BJ (cell line): ENCODE measurements at regions of chr1 and their contacts with region 1.

Region 1: GRCh38 chr1:160006312-160006940 is 25.4 kb downstream of the PIGM start:
- DNase-seq: no peak
- H3K4me3 ChIP-seq: no peak overlapping the region
- H3K27me3 ChIP-seq: peaks cover 3% of the 10 kb centered on the region
- CTCF ChIP-seq: peak; percentile 98

Region 2: GRCh38 chr1:159780583-159781582 is 225.5 kb before region 1 on chr1 and contains the start of gene DUSP23:
- CTCF ChIA-PET with region 1: interaction called, 15 read pairs
- POLR2A ChIA-PET with region 1: no interaction called
- DNase-seq: peak; percentile 94
- H3K4me3 ChIP-seq: peak within 1 kb of the TSS; percentile 90
- H3K27me3 ChIP-seq: peaks cover 2% of the 10 kb centered on the region
- CTCF ChIP-seq: peak; percentile 97
- polyA plus RNA-seq, gene DUSP23: 16.0 and 22.8 TPM in 2 replicates

Region 3: DNA sequence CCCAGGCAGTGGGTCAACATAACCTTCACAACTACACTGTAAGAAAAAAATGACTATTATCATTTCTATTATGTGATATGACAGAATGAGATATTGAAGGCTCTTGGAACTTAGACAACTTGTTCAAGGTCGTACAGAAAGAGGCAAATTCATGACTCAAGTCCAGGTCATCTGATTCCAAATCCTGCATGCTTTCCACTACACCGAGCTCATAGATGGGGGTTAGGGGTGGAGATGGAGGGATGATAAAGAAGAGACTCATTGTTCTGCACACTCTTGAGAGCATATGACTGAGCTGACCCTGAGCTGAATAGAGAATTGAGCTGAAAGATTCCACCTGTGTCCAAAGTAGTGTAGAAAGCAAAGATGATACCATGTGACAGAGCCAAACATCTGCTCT is 201.5 kb before region 1 on chr1:
- CTCF ChIA-PET with region 1: interaction called, 55 read pairs
- POLR2A ChIA-PET with region 1: no interaction called
- DNase-seq: no peak
- H3K4me3 ChIP-seq: no peak overlapping the region
- H3K27me3 ChIP-seq: no peaks in the 10 kb centered on the region; the same call in 1 of the 2 replicates
- CTCF ChIP-seq: no peak

Region 4: DNA sequence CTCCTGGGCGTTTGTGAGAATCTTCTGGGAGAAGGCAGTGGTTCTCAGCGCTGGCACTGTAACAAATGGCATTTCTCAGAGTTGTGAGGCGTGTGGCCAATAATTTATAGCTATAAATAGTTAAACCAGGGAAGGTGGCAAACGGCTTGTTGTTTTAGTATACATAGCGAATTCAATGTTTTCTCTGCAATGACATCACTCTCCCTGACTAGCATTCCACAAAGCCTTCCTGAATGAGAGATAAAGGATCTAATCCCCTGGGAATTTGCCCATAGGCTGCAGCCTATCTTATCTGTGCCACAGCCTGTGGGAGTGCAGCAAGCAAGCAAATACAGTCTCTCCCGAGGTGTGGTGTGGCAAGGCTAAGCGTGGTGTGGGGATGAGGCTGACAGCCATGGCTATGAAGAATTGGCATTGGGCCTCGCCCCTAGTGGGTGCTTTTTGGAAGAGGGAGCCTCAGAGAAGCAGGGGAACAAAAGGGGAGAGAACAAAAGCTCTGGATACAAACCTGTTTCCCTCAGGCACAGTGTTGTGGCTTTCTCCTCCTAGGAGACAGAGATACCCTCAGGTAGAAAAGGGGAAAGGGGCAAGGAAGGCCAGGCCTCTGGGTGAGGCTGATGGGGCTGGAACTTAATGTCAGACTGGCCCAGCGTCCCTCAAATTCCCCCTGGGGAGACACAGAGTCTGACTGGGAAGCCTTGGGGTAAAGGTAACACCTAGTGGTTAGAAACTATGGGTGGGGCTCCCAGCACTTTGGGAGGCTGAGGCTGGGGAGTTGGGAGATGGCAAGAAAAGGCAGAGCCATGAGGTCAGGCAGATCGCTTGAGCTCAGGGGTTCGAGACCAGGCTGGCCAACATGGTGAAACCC is 90.0 kb before region 1 on chr1:
- CTCF ChIA-PET with region 1: interaction called, 889 read pairs
- POLR2A ChIA-PET with region 1: no interaction called
- DNase-seq: no peak
- H3K4me3 ChIP-seq: no peak overlapping the region
- H3K27me3 ChIP-seq: no peaks in the 10 kb centered on the region
- CTCF ChIP-seq: no peak

Region 5: DNA sequence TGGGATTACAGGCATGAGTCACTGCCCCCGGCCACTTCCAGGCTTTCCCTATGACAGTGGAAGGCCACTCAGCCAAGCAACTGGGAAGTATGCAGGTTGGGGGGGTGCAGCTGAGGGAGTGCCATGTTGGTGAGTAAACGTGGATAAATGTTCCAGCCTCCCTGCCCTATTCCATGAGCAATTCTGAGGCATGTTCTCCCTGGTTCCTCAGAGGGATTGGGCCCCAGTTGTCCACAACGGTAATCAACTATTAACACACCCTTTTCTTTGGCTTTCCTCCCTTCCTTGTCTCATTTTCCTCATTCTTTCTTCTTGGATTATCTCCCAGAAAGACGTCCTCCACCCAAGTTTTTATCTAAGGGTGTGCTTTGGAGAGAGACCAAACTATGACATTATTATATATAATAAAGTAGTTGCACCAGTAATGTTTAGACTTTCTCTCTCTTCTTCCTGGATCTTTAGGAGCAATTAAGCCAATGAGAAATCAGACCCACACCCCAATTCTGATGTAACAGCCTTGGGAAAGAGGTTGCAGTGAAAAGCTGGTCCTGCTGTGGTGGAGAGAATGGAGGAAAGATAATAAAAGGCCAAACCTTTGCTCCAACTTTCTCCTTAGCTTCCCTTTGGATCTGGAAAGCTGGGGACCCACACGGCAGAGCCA is 45.6 kb before region 1 on chr1:
- CTCF ChIA-PET with region 1: interaction called, 889 read pairs
- POLR2A ChIA-PET with region 1: no interaction called
- DNase-seq: peak; percentile 88
- H3K4me3 ChIP-seq: peak overlapping the region; percentile 49
- H3K27me3 ChIP-seq: no peaks in the 10 kb centered on the region; the same call in 1 of the 2 replicates
- CTCF ChIP-seq: no peak

Region 6: GRCh38 chr1:159991513-159991912 is 14.9 kb before region 1 on chr1:
- CTCF ChIA-PET with region 1: interaction called, 15 read pairs
- POLR2A ChIA-PET with region 1: no interaction called
- DNase-seq: no peak
- H3K4me3 ChIP-seq: no peak overlapping the region
- H3K27me3 ChIP-seq: no peaks in the 10 kb centered on the region
- CTCF ChIP-seq: no peak

Region 7: GRCh38 chr1:160031365-160032164 is 25.1 kb after region 1 on chr1 and contains the start of gene PIGM:
- CTCF ChIA-PET with region 1: interaction called, 24 read pairs
- POLR2A ChIA-PET with region 1: no interaction called
- DNase-seq: peak; percentile 36
- H3K4me3 ChIP-seq: peak within 1 kb of the TSS; percentile 55
- H3K27me3 ChIP-seq: no peaks in the 10 kb centered on the region
- CTCF ChIP-seq: no peak
- polyA plus RNA-seq, gene PIGM: 3.5 and 4.8 TPM in 2 replicates